ENCODE measurements at regions of chr19 and their contacts with region 1.

Region 1: DNA sequence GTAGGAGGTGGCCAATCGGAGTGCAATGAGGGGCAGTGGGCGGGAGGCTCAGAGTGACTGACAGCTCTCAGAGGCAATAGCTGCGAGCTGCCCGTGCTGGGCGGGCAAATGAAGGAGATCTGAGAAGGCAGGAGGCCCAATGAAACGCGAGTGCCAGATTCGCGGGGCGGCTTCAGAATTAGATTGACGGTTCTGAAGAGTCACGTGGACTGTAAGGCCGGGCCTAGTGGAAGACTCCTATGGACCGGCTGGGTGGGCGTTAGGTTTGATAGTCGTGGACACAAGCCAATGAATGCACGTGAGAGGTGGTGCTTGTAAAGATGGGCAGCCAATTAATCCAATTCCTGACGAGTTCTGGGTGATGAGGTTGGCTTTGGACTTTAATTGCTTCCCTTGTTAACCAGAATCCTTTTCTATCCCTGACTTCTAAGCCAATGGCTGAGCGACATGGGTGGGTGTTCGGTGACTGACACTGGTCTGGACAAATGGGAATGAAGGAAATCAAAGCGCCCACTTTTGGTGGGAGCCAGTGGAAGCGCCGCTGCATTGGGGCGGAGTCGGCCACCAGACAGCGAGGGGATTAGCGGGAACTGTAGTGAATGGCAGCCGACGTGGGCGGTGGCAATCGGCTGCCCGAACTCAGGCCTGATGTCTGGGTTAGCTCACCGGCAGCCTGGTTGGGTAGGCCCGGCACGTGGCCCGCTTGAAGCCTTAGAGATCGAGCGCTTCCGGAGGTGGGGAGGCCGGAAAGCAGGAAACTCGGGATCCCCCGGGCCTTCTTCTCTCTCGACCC is 524 bp upstream of the KHSRP start:
- DNase-seq: peak; percentile 100
- ATAC-seq: peak; percentile 88
- H3K4me3 Mint-ChIP-seq: peak overlapping the region; percentile 73
- H3K27ac Mint-ChIP-seq: peak overlapping the region; percentile 98
- H3K4me1 Mint-ChIP-seq: peaks cover 31% of the 10 kb centered on the region
- H3K27me3 Mint-ChIP-seq: no peaks in the 10 kb centered on the region

Region 2: DNA sequence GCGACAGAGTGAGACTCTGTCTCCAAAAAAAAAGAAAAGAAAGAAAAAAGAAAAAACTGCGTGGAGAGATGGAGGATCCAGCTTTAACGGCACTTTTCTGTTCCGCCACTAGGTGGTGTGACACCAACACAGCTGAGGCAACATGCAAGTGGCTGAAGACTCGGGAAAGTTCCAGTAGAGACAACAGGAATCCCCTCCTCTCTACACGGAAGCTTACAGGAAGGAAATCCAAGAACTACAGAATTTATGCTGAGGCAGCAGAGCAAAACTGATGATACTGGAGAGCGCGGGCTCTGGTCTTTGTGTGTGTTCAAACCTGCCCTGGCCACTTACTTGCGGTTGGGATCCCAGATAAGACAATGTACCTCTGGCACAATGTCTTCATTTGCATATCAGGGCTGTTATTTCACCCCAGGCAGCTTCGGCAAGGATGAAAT is 457.1 kb before region 1 on chr19:
- CTCF ChIA-PET with region 1: no interaction called
- POLR2A ChIA-PET with region 1: no interaction called
- intact Hi-C with region 1: no loop called
- DNase-seq: peak; percentile 80
- ATAC-seq: peak; percentile 89
- H3K4me3 Mint-ChIP-seq: no peak overlapping the region
- H3K27ac Mint-ChIP-seq: peak overlapping the region; percentile 89
- H3K4me1 Mint-ChIP-seq: peaks cover 87% of the 10 kb centered on the region
- H3K27me3 Mint-ChIP-seq: no peaks in the 10 kb centered on the region

Region 3: DNA sequence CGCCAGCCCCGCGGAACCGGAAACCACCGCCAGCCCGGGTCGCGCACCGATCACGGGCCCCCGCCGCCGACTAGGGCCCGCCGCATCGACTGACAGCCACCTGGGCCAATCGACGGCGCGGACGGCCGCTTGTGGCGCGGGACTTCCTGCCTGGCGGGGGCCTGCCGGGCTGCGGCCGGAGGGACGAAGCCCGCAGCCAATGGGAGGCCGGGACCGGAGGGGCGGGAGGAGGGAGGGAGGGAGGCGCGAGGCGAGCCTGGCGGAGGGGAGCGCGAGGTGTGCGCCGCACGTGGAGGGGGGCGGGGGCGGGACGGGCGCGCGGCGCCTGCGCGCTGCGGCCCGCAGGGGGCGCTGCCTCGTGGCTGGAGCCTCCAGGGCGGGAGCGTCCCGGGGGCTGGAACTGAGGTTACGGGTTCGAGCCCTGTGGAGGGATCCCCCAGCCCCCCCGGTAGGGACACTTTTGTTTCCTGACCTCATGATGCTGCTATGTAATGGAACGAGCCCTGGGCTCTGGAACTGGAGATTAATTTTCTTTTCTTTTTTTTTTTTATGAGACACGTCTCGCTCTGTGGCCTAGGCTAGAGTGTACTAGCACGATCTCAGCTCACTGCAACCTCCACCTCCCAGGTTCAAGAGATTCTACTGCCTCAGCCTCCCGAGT is 145.1 kb before region 1 on chr19 and contains the start of gene MLLT1:
- CTCF ChIA-PET with region 1: interaction called, 3 read pairs
- POLR2A ChIA-PET with region 1: interaction called, 3 read pairs
- intact Hi-C with region 1: loop called in 1 of 2 experiments (anchors 1 kb)
- DNase-seq: peak; percentile 98
- ATAC-seq: peak; percentile 98
- H3K4me3 Mint-ChIP-seq: peak within 1 kb of the TSS; percentile 98
- H3K27ac Mint-ChIP-seq: peak within 1 kb of the TSS; percentile 93
- H3K4me1 Mint-ChIP-seq: peaks cover 38% of the 10 kb centered on the region
- H3K27me3 Mint-ChIP-seq: peaks cover 2% of the 10 kb centered on the region
- total RNA-seq, gene MLLT1: 45.0 to 46.6 TPM

Region 4: DNA sequence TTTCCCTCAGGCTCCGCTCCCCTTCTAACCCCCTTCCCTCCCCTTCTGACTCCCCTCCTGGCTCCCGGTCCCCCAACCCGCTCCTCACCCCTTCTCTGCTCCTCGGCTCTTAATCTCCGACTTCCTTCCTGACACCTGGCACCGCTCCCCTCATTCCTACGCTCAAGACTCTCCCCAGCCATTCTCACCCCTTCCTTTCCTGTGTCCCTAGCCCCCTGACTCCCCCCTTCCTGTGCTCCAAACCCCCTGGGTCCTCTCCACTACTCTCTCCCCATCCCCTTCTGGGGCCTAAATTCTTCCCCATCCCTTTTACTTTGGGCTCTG is 63.1 kb before region 1 on chr19:
- CTCF ChIA-PET with region 1: no interaction called
- POLR2A ChIA-PET with region 1: interaction called, 8 read pairs
- intact Hi-C with region 1: loop called (anchors 1 kb)
- DNase-seq: no peak
- ATAC-seq: peak; percentile 1
- H3K4me3 Mint-ChIP-seq: peak overlapping the region; percentile 85
- H3K27ac Mint-ChIP-seq: peak overlapping the region; percentile 91
- H3K4me1 Mint-ChIP-seq: peaks cover 16% of the 10 kb centered on the region
- H3K27me3 Mint-ChIP-seq: no peaks in the 10 kb centered on the region

Region 5: DNA sequence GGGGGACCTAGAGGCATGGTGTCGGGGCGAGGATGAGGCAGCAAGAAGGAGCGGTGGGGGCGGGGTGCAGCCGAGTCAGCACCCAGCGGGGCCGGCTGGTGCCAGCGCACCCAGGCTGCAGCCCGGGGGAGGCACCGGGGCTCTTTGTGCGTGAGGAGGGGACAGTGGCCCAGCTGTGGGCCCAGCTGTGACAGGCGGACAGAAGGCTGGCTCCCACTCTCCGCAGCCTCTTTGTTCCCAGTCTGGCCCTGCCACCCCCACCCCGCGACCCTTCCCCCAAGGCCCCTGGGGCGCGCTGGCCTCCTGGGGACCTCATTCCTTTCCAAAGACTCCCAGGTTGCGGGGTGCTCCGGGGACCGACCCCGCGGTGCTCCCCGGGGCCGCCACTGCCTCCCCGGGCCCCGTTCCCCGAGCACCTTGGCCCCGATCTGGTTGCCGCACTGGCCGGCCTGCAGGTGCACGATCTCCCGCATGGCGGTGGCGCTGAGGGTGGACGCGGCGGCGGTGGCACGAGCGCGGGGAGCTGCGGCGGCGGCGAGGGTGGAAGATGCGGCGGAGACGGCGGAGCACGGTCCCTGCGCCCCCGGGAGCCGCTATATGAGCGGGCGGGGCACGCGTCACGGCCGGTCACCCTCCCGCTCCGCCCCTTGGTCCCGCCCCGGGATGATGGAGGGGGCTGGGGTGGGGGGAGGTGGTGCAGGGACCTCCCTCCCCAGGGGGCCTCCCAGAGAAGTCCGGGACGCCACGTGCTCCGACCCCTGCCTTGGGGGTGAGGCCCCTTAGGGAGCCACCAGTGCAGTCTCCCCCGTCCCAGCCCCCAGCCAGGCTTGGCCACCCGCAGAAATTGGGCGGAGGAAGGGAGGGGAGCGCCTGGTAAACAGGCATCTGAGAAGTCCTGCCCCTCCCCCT is 76.9 kb after region 1 on chr19 and contains the start of gene TUBB4A:
- CTCF ChIA-PET with region 1: no interaction called
- POLR2A ChIA-PET with region 1: interaction called, 7 read pairs
- intact Hi-C with region 1: loop called in 1 of 2 experiments (anchors 2 kb)
- DNase-seq: peak; percentile 70
- ATAC-seq: peak; percentile 49
- H3K4me3 Mint-ChIP-seq: peak within 1 kb of the TSS; percentile 68
- H3K27ac Mint-ChIP-seq: no peak within 1 kb of the TSS
- H3K4me1 Mint-ChIP-seq: peaks cover 7% of the 10 kb centered on the region
- H3K27me3 Mint-ChIP-seq: peaks cover 7% of the 10 kb centered on the region
- total RNA-seq, gene TUBB4A: 4.8 to 5.1 TPM

Region 6: GRCh38 chr19:6753178-6754031 is 328.3 kb after region 1 on chr19:
- CTCF ChIA-PET with region 1: no interaction called
- POLR2A ChIA-PET with region 1: no interaction called
- intact Hi-C with region 1: loop called in 1 of 2 experiments (anchors 1 kb)
- DNase-seq: peak; percentile 93
- ATAC-seq: peak; percentile 94
- H3K4me3 Mint-ChIP-seq: peak overlapping the region; percentile 59
- H3K27ac Mint-ChIP-seq: peak overlapping the region; percentile 47
- H3K4me1 Mint-ChIP-seq: peaks cover 13% of the 10 kb centered on the region
- H3K27me3 Mint-ChIP-seq: no peaks in the 10 kb centered on the region

Region 7: DNA sequence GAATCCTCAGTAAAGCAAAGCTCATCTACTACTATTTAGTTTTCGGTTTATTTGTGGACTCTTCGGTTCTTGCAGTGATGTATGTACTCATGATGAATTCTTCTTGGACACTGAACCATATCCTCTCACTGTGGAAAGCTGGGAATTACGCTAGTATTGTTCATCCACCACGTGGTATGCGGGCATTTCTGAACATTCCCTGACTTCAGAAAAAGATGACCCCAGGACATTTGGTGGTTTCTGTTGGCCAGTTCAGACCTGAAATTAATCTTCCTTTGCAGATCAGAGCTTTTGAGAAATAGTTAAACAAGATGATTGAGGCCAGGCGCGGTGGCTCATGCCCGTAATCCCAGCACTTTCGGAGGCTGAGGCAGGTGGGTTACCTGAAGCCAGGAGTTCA is 1749.6 kb after region 1 on chr19:
- CTCF ChIA-PET with region 1: no interaction called
- POLR2A ChIA-PET with region 1: no interaction called
- intact Hi-C with region 1: no loop called
- DNase-seq: no peak
- ATAC-seq: no peak
- H3K4me3 Mint-ChIP-seq: no peak overlapping the region
- H3K27ac Mint-ChIP-seq: no peak overlapping the region
- H3K4me1 Mint-ChIP-seq: no peaks in the 10 kb centered on the region
- H3K27me3 Mint-ChIP-seq: no peaks in the 10 kb centered on the region

Measured in activated CD4-positive, alpha-beta T cell treated with anti-CD3 and anti-CD28 coated beads for 36 hours (primary cell).